SK-N-SH (cell line): ENCODE measurements at regions of chr10 and their contacts with region 1.

Region 1: DNA sequence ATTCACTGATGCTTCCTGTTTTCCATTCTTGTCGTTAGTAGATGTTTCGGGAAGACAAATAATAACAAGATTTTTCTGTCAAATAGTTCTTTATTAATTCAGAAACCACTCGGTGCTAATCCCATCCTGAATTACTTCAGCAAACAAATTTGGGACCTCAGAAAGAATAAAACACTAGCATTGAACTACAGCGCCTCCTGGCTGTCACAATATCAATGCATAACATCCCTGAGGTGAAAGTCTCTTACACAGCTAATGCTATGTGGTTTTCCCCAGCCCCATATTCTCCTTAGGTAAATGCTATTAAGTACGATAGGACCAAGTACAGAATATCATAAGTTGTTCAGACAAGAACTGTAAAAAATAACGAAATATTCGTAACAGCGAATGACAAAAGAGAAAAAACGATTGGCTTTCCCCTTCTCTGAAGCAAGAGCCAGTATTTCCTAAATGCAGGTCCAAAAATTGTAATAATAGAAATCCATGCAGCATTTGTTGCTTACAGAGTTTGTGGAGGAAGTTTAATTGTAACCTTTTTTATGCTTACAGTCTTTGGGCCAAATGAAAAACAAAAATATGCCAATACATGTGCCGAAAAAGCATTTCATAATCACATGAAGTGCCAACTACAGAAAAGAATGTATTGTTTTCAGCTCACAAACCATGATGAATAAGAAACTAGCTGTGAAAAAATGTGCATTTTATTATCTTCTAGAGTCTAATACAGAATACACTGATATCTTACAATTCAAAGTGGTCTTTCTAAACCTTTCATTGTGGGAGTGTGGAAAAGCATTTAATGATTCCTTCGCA is 47.3 kb downstream of the MYPN start:
- DNase-seq: peak; percentile 35
- H3K4me3 ChIP-seq: no peak overlapping the region; a peak in 1 of 4 replicates
- H3K27ac ChIP-seq: no peak overlapping the region
- H3K4me1 ChIP-seq: peaks cover 11 to 27% of the 10 kb centered on the region in 2 experiments; a peak in 3 of 4 replicates
- H3K27me3 ChIP-seq: no peaks in the 10 kb centered on the region
- CTCF ChIP-seq: peak; percentile 93
- EP300 ChIP-seq: no peak
- RAD21 ChIP-seq: peak; percentile 86

Region 2: DNA sequence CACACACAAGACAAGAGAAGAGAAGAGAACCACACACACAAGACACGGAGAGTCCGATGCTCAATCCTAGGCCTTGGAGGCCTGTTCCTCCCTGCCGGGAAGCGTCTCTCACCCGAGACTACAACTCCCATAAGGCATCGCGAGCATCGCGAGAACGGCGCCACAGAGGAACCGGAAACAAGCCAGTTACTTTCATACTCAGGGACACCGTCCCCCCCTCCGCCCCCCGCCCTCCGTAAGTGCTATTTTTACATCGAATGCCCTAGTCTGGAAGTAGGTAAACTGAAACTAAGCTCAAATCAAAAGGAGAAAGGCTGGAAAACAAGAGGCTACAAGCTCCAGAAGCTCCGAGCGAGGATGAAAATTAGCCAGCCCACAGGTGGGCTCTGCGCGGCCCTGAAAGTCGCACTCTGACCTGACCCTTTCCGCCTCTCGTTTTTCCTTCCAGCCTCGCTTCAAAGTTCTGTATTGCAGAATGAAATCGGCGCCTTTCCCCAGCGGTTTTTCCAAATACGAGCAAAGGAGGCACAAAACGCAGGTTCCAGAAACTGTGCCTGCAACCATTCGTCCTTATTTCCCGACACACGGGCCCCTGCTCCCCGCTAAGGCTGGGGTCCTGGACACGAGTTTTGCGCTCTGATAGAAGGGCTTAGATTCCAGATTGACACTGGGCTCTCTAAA is 307.1 kb before region 1 on chr10:
- CTCF ChIA-PET with region 1: interaction called, 79 read pairs
- POLR2A ChIA-PET with region 1: no interaction called
- DNase-seq: peak; percentile 88
- H3K4me3 ChIP-seq: peak overlapping the region; percentile 69 to 86
- H3K27ac ChIP-seq: peak overlapping the region; percentile 89 to 91
- H3K4me1 ChIP-seq: peaks cover 0 to 3% of the 10 kb centered on the region in 2 experiments; a peak in 1 of 4 replicates
- H3K27me3 ChIP-seq: no peaks in the 10 kb centered on the region
- CTCF ChIP-seq: no peak
- EP300 ChIP-seq: no peak
- RAD21 ChIP-seq: no peak

Region 3: GRCh38 chr10:68082872-68083271 is 73.7 kb before region 1 on chr10:
- CTCF ChIA-PET with region 1: interaction called, 50 read pairs
- POLR2A ChIA-PET with region 1: no interaction called
- DNase-seq: peak; percentile 32
- H3K4me3 ChIP-seq: no peak overlapping the region
- H3K27ac ChIP-seq: peak overlapping the region in 1 of 2 experiments; percentile 55; a peak in 3 of 4 replicates
- H3K4me1 ChIP-seq: peaks cover 0 to 32% of the 10 kb centered on the region in 2 experiments; a peak in 2 of 4 replicates
- H3K27me3 ChIP-seq: no peaks in the 10 kb centered on the region
- CTCF ChIP-seq: peak; percentile 78
- EP300 ChIP-seq: no peak
- RAD21 ChIP-seq: peak; percentile 79

Region 4: DNA sequence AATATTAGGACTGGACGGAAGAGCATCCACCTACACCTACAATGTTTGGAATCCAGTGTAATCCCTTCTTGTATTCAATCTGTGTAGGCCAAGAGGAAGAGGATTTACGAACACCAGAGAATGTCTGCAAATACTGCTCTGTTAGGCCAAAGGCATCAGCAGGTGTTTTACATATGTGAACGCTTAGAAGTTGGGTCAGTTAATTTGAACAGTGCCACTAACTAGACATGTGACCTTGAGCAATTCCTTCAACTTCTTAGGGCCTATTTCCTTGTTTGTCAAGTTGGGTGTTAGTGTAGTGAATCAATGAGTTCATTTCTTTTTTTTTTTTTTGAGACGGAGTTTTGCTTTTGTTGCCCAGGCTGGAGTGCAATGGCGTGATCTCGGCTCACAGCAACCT is 11.9 kb before region 1 on chr10:
- CTCF ChIA-PET with region 1: interaction called, 12 read pairs
- POLR2A ChIA-PET with region 1: no interaction called
- DNase-seq: no peak
- H3K4me3 ChIP-seq: no peak overlapping the region
- H3K27ac ChIP-seq: no peak overlapping the region
- H3K4me1 ChIP-seq: no peaks in the 10 kb centered on the region
- H3K27me3 ChIP-seq: no peaks in the 10 kb centered on the region
- CTCF ChIP-seq: no peak
- EP300 ChIP-seq: no peak
- RAD21 ChIP-seq: no peak

Region 5: GRCh38 chr10:68166871-68167585 is 10.4 kb after region 1 on chr10:
- CTCF ChIA-PET with region 1: interaction called, 24 read pairs
- POLR2A ChIA-PET with region 1: no interaction called
- DNase-seq: no peak
- H3K4me3 ChIP-seq: no peak overlapping the region
- H3K27ac ChIP-seq: no peak overlapping the region
- H3K4me1 ChIP-seq: peaks cover 0 to 4% of the 10 kb centered on the region in 2 experiments; a peak in 1 of 4 replicates
- H3K27me3 ChIP-seq: no peaks in the 10 kb centered on the region
- CTCF ChIP-seq: no peak
- EP300 ChIP-seq: no peak
- RAD21 ChIP-seq: no peak